ENCODE measurements at regions of chr18 and their contacts with region 1.

Region 1: GRCh38 chr18:8478166-8478967 is 130.9 kb upstream of the RAB12 start:
- DNase-seq: peak; percentile 52 to 63 (median 59)
- ATAC-seq: no peak
- H3K4me3 ChIP-seq: no peak overlapping the region
- H3K27ac ChIP-seq: no peak overlapping the region
- H3K4me1 ChIP-seq: no peaks in the 10 kb centered on the region
- H3K27me3 ChIP-seq: no peaks in the 10 kb centered on the region
- CTCF ChIP-seq: peak; percentile 54 to 80 (median 75)
- POLR2A ChIP-seq: no peak

Region 2: DNA sequence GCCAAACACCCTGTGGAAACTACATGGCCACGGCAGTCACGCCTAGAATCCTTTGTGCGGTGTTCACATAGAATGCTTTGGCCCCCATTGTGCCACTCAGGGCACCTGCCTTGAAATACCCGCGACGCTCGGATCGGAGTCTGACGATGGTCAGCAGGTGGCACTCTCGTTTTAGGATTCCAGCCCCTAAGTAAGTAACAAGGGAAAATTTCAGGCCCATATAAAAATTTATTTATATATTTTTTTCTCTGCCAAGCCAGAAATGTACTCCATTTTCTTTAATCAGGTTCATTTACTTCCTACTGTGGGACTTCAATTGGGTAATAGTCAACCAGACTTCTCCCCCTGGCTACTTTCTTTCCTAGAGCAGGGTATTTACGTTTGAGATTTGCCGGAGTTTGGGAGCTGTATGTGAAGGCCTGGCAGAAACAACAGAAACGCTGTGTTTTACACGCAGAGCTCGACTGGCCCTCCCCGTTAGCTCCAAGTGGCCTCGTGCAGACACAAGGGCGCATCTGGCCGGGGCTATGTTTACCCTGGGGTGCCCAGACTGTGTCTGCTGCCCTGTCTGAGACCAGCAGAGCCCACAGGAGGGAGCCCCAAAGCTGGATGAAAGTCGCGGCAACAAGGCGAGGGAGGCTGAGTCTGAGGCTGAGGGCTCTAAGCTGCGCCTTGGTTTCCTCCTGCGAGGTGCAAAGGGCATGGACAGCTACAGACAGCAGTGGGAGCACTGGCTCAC is 1205.9 kb before region 1 on chr18:
- intact Hi-C with region 1: loop called (anchors 10 kb)
- DNase-seq: peak; percentile 63 to 75 (median 71)
- ATAC-seq: peak; percentile 78
- H3K4me3 ChIP-seq: no peak overlapping the region
- H3K27ac ChIP-seq: peak overlapping the region in 2 of 4 donors; percentile 45 to 54
- H3K4me1 ChIP-seq: peaks cover 8% of the 10 kb centered on the region
- H3K27me3 ChIP-seq: no peaks in the 10 kb centered on the region
- CTCF ChIP-seq: peak; percentile 19 to 64 (median 59)
- POLR2A ChIP-seq: no peak

Region 3: DNA sequence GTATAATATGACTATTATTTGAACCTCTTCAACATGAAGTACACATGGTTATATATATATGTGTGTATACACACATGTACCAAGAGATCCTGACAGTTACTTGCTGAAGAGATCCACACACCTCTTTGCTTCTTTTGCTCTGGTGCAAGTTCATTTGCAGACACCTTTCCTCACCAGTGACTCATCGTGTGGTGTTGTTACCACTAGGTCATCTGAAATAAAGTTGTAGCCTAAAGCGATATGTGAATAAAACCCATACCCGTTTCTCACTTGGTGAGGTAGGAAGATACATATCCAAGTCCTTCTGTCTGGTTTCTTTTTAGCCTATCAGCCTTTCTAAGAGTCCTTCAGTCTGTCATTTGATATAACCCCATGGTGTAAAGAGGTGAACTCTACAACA is 248.6 kb before region 1 on chr18:
- intact Hi-C with region 1: no loop called
- DNase-seq: no peak
- ATAC-seq: no peak
- H3K4me3 ChIP-seq: no peak overlapping the region
- H3K27ac ChIP-seq: no peak overlapping the region
- H3K4me1 ChIP-seq: no peaks in the 10 kb centered on the region
- H3K27me3 ChIP-seq: no peaks in the 10 kb centered on the region
- CTCF ChIP-seq: no peak
- POLR2A ChIP-seq: no peak

Region 4: GRCh38 chr18:8623549-8624106 is 145.3 kb after region 1 on chr18:
- intact Hi-C with region 1: no loop called
- DNase-seq: no peak
- ATAC-seq: peak; percentile 15
- H3K4me3 ChIP-seq: no peak overlapping the region
- H3K27ac ChIP-seq: peak overlapping the region in 2 of 4 donors; percentile 28 to 38
- H3K4me1 ChIP-seq: peaks cover 25% of the 10 kb centered on the region
- H3K27me3 ChIP-seq: no peaks in the 10 kb centered on the region
- CTCF ChIP-seq: no peak
- POLR2A ChIP-seq: no peak

Region 5: GRCh38 chr18:8765783-8766463 is 287.6 kb after region 1 on chr18:
- intact Hi-C with region 1: no loop called
- DNase-seq: no peak
- ATAC-seq: no peak
- H3K4me3 ChIP-seq: no peak overlapping the region
- H3K27ac ChIP-seq: no peak overlapping the region
- H3K4me1 ChIP-seq: no peaks in the 10 kb centered on the region
- H3K27me3 ChIP-seq: no peaks in the 10 kb centered on the region
- CTCF ChIP-seq: no peak
- POLR2A ChIP-seq: no peak

Measured in body of pancreas (tissue), 4 donors.